OCI-LY7 (cell line): ENCODE measurements at regions of chr2 and their contacts with region 1.

Region 1: GRCh38 chr2:103847276-103847675 is 1006.6 kb upstream of the POU3F3 start:
- DNase-seq: no peak
- H3K4me3 ChIP-seq: no peak overlapping the region
- H3K27ac ChIP-seq: no peak overlapping the region
- H3K4me1 ChIP-seq: no peaks in the 10 kb centered on the region
- CTCF ChIP-seq: no peak

Region 2: DNA sequence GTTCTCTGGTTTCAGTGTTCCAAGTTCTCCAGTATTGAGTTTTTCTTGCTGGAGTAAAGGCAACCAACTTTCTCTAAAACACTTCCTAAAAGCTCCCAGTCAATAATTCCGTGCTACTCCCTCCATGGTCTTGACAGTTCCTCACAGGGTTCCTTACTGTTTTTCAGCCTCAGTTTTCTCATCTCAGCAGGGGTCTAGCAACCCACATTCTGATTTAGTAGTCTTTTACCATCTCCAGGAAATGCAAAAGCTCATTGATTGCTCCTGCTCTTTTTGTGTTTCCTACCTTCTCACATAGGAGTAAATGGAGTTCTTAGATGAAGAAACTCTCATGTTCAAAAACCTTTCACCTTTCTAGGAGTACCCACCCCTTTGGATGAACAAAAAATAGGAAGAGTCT is 27.9 kb after region 1 on chr2:
- CTCF ChIA-PET with region 1: no interaction called
- POLR2A ChIA-PET with region 1: no interaction called
- intact Hi-C with region 1: loop called (anchors 1 kb)
- DNase-seq: no peak
- H3K4me3 ChIP-seq: no peak overlapping the region
- H3K27ac ChIP-seq: no peak overlapping the region
- H3K4me1 ChIP-seq: no peaks in the 10 kb centered on the region
- CTCF ChIP-seq: no peak